ENCODE measurements at regions of chr17 and their contacts with region 1.

Region 1: DNA sequence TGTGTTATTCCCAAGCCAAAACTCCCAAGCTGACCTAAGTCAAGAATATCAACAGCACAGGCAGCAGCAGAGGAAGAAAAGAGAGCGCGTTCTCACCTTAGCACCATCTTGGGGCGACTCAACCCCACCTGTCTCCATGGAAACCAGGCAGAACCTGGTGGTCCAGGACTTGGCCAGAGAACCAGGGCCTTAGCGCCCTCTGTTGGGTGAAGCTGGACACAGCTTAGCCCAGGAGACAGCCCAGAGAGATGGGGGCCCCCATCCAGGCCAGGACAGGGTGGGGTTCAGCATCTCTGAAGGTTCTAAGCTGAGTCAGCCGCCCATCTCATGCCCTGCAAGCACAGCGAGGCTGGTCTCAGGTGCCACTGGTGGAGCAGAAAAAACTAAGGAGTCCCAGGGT is 60.1 kb upstream of the TMEM132E start:
- DNase-seq: no peak
- ATAC-seq: no peak

Region 2: GRCh38 chr17:34420254-34420766 is 99.0 kb before region 1 on chr17:
- intact Hi-C with region 1: loop called (anchors 5 kb)
- DNase-seq: no peak
- ATAC-seq: no peak

Region 3: DNA sequence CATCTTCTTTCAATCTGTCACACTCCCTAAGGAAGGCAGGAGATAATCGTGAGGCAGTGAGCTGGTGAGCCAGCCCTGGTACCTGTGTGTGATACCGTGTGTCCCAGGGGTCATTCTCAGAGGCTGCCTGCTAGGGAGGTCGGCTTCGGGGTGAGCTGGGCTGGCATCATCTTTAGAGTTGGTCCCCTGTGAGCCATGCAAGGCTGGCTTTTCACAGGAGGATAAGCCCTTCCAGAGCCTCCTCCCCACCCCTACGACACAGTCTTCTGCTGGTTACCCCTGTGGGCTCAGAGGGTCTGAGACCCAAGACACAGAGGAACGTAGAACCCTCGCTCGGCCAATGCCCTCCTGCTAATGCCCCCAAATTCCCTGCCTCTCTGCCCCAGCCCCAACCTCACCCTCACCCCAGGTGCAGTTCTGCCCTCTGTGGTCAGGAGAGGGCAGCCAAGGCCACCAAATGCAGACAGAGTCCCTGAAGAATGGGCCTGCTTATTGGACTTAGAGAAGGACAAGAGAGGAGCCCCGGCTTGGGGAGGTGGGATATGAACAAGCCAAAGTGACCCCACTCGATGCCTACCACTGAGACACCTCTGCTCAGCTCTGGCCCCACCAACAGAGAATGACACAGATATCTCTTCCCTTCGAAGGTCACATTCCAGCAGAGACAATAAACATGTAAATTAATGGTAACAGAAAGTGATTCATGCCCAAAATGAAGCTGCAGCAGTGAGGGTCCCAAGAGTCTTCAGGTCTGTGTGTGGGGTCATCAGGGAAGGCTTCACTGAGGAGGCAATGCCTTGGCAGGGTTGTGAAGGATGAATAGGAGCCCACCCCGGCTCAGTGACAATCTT is 75.4 kb before region 1 on chr17:
- intact Hi-C with region 1: loop called (anchors 5 kb)
- DNase-seq: peak; percentile 58
- ATAC-seq: peak; percentile 62

Measured in Right ventricle myocardium inferior (tissue), 1 donor.